ENCODE measurements at regions of chr3 and their contacts with region 1.

Region 1: DNA sequence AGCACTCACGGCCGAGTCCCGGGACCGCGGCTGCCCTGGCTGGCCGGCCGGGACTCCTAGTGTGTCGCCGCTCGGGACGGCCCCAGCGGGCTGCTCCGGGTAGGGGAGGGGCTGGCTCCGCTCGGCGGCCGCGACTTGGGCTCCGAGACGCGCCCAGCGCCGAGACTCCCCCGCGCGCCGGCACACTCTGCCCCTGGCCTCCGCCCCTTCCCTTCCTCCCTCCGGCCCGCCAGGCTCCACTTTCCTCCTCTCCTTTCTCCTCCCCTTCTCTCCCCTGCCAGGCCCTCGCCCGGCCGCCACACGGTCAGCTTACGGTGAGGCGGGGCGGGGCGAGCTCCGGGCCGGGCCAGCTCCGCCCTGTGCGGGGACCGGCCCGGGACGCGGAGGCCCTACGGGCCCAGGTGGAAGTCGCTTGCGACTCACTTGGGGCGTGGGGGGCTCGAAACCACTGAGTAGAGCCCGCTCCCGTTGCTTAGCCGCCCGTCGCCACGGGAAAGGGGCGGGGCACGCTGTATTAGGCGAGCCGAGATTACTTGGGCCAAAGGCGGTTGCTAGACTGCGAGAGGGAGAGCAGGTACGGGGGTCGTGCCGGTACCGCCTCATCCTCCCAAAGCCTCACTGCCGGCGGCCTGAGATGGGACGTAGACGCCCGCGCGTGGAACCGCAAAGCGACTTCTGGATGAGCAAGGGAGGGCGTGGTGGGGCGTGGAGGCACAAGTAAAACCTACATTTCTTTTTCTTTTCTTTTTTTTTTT is at the start of gene ITGB5:
- DNase-seq: peak; percentile 72
- H3K4me3 ChIP-seq: peak within 1 kb of the TSS; percentile 36 to 73 (median 47)
- H3K27ac ChIP-seq: peak within 1 kb of the TSS; percentile 57
- H3K4me1 ChIP-seq: peaks cover 23% of the 10 kb centered on the region
- H3K27me3 ChIP-seq: no peaks in the 10 kb centered on the region
- CTCF ChIP-seq: no peak
- POLR2A ChIP-seq: peak; percentile 57
- total RNA-seq, gene ITGB5: 144 TPM in 2 replicates

Region 2: DNA sequence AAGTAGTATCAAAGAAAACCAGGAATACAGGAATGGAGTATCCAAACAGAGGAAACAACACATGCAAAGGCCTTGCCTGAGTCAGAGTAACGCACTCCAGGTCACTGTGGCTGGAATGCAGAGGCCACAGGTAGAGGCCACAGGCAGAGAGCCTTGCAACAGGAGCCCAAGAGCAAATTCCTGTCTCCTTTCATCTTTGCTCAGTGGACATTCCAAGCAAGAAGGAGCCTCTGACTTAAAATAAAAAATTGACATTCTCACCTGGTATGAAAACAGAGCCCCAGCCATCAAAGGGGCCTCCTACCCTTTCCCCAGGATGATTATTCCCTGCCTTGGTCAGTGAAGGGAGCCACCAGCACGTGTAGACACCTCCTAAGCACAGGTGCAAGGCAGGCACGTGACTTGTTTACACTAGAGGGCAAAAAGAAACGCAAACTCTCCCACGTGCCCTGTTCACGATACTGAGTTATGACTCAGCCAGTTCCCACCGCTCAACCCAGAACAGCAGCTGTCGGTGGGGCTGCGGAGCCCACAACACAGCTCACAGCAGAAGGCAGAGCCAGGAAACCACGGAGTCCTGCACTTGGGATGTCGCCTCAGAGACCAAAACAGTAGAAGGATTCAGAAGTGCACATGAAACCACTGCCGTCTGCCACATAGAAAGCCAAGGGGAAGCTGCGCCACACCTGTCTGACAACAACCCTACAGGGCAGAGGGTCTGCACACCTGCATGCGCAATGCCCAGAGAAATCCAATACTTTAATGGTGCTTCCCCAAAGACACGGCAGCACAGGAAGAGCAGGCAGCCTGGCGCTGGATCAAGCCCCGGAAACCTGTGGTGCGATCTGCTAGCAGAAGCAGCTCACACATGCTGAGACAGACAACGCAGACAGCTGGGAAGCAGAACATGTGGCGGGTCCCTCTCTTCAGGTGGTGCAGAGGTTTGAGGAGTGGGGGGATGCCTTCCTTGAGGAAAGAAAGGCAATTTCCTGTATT is 52.3 kb before region 1 on chr3:
- CTCF ChIA-PET with region 1: no interaction called
- POLR2A ChIA-PET with region 1: no interaction called
- dilution Hi-C with region 1: no loop called
- intact Hi-C with region 1: loop called (anchors 1 kb)
- DNase-seq: peak; percentile 90
- H3K4me3 ChIP-seq: no peak overlapping the region
- H3K27ac ChIP-seq: peak overlapping the region; percentile 25
- H3K4me1 ChIP-seq: peaks cover 44% of the 10 kb centered on the region
- H3K27me3 ChIP-seq: no peaks in the 10 kb centered on the region
- CTCF ChIP-seq: no peak
- POLR2A ChIP-seq: no peak

Region 3: DNA sequence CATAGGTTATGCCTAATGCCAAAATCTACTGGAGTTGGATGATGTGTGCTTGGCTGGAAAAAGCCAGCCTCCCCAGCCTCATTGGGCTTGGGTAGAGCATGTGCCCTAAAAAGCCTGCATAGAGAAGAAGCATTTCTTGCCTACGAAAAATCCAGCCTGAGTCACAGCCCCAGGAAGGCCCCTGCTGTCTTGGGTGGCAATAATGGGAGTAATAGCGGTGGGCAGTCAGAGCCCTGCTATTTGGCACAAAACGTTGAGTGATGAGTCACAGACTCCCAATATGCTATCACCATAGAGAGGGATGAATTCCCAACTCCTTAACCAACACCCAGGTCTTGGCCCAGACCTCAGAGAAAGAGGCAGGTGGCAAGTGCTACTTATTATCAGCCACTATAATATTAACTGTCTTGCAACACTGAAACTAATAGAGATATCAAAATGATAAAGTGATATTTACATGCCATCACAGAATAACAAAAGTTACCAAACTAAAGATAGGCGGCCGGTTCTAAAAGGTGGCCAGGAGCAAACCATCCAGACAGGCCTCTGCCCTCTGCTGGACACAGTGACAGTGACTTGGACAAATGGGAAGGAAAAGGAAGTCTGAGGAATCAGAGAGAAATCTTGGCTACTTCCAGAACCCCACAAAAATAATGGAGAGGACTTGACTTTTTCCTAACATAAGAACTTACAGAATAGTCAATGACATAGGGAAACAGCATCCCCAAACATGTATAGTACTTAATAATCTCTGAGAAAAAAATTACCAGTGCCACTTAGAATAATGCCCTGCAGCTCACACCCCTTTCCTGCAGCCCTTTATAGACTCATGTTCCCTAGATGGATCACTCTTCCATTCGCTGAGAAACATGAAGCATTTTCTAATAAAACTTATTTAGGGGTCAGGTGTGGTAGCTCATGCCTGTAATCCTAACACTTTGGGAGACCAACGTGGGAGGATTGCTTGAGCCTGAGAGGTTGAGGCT is 99.1 kb after region 1 on chr3:
- CTCF ChIA-PET with region 1: no interaction called
- POLR2A ChIA-PET with region 1: no interaction called
- dilution Hi-C with region 1: no loop called
- intact Hi-C with region 1: no loop called
- DNase-seq: peak; percentile 52
- H3K4me3 ChIP-seq: no peak overlapping the region
- H3K27ac ChIP-seq: peak overlapping the region; percentile 61
- H3K4me1 ChIP-seq: peaks cover 29% of the 10 kb centered on the region
- H3K27me3 ChIP-seq: no peaks in the 10 kb centered on the region
- CTCF ChIP-seq: peak; percentile 36 to 37
- POLR2A ChIP-seq: no peak